ENCODE measurements at regions of chr6 and their contacts with region 1.

Region 1: GRCh38 chr6:73562557-73562956 is 41.7 kb upstream of the EEF1A1 start:
- DNase-seq: no peak
- ATAC-seq: no peak
- H3K4me3 ChIP-seq: no peak overlapping the region
- H3K4me3 Mint-ChIP-seq: no peak overlapping the region
- H3K27ac ChIP-seq: no peak overlapping the region
- H3K27ac Mint-ChIP-seq: no peak overlapping the region
- H3K4me1 ChIP-seq: no peaks in the 10 kb centered on the region
- H3K4me1 Mint-ChIP-seq: peaks cover 0 to 3% (median 0%) of the 10 kb centered on the region in 3 donors
- H3K27me3 ChIP-seq: no peaks in the 10 kb centered on the region
- H3K27me3 Mint-ChIP-seq: no peaks in the 10 kb centered on the region

Region 2: GRCh38 chr6:72504406-72504805 is 1058.2 kb before region 1 on chr6:
- CTCF ChIA-PET with region 1: interaction called in 1 of 2 experiments, 10 read pairs
- POLR2A ChIA-PET with region 1: no interaction called
- DNase-seq: no peak
- ATAC-seq: no peak
- H3K4me3 ChIP-seq: no peak overlapping the region
- H3K4me3 Mint-ChIP-seq: no peak overlapping the region
- H3K27ac ChIP-seq: no peak overlapping the region
- H3K27ac Mint-ChIP-seq: no peak overlapping the region
- H3K4me1 ChIP-seq: no peaks in the 10 kb centered on the region
- H3K4me1 Mint-ChIP-seq: no peaks in the 10 kb centered on the region
- H3K27me3 ChIP-seq: peaks cover 0 to 7% of the 10 kb centered on the region in 2 experiments
- H3K27me3 Mint-ChIP-seq: peaks cover 2 to 9% of the 10 kb centered on the region in 2 donors

Region 3: GRCh38 chr6:74768120-74768519 is 1205.6 kb after region 1 on chr6:
- CTCF ChIA-PET with region 1: no interaction called
- POLR2A ChIA-PET with region 1: no interaction called
- DNase-seq: no peak
- ATAC-seq: no peak
- H3K4me3 ChIP-seq: no peak overlapping the region
- H3K4me3 Mint-ChIP-seq: no peak overlapping the region
- H3K27ac ChIP-seq: no peak overlapping the region
- H3K27ac Mint-ChIP-seq: no peak overlapping the region
- H3K4me1 ChIP-seq: no peaks in the 10 kb centered on the region
- H3K4me1 Mint-ChIP-seq: no peaks in the 10 kb centered on the region
- H3K27me3 ChIP-seq: no peaks in the 10 kb centered on the region
- H3K27me3 Mint-ChIP-seq: no peaks in the 10 kb centered on the region